ENCODE measurements at regions of chr17 and their contacts with region 1.

Region 1: GRCh38 chr17:74528491-74529199 is 2.6 kb downstream of the CD300LB start:
- DNase-seq: peak; percentile 12
- ATAC-seq: peak; percentile 89
- H3K4me3 Mint-ChIP-seq: no peak overlapping the region
- H3K27ac Mint-ChIP-seq: peak overlapping the region; percentile 27
- H3K4me1 Mint-ChIP-seq: peaks cover 32% of the 10 kb centered on the region
- H3K27me3 Mint-ChIP-seq: peaks cover 7% of the 10 kb centered on the region
- CTCF ChIP-seq: no peak

Region 2: DNA sequence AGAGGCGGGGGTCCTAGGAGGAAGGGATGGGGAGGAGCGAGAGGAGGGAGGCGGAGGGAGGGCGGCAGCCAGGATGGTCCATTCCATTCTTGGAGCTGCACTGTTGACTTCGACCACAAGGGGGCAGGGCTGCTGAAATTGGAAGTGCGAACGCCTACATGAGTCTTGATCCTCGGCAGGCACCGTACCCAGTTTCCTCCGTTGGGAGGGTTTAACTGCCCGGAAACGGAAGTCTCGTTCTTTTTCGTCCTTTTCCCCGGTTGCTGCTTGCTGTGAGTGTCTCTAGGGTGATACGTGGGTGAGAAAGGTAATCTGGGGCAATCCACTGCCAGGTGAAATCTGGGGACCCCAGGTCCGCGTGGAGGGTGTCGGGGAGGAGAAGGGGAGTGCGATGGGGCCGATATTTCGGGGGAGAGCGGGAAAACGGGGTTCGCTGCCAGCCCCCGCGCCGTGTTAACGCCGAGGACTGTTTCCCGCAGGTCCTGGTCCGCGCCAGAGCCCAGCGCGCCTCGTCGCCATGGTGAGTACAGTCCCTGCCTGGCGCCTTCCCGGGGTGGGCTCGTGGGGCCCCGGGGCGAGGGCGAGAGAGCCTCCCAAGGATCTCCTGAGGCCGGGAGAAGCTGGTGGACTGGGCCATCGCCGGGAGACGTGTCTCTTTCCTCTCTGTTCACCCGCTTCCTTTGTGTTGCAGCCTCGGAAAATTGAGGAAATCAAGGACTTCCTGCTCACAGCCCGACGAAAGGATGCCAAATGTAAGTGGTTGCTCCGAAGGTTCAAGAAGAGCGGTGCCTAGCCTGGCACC is 325.0 kb before region 1 on chr17 and contains the start of gene RPL38:
- CTCF ChIA-PET with region 1: interaction called, 3 read pairs
- POLR2A ChIA-PET with region 1: interaction called, 5 read pairs
- intact Hi-C with region 1: loop called (anchors 1 kb)
- DNase-seq: peak; percentile 90
- ATAC-seq: peak; percentile 94
- H3K4me3 Mint-ChIP-seq: peak within 1 kb of the TSS; percentile 100
- H3K27ac Mint-ChIP-seq: peak within 1 kb of the TSS; percentile 98
- H3K4me1 Mint-ChIP-seq: peaks cover 47% of the 10 kb centered on the region
- H3K27me3 Mint-ChIP-seq: peaks cover 23% of the 10 kb centered on the region
- CTCF ChIP-seq: no peak
- total RNA-seq, gene RPL38: 1,330 and 1,676 TPM in 2 replicates

Region 3: GRCh38 chr17:74368092-74369081 is 160.3 kb before region 1 on chr17:
- CTCF ChIA-PET with region 1: interaction called, 40 read pairs
- POLR2A ChIA-PET with region 1: interaction called, 3 read pairs
- intact Hi-C with region 1: loop called (anchors 1 kb)
- DNase-seq: peak; percentile 64
- ATAC-seq: peak; percentile 77
- H3K4me3 Mint-ChIP-seq: no peak overlapping the region
- H3K27ac Mint-ChIP-seq: no peak overlapping the region
- H3K4me1 Mint-ChIP-seq: peaks cover 14% of the 10 kb centered on the region
- H3K27me3 Mint-ChIP-seq: peaks cover 17% of the 10 kb centered on the region
- CTCF ChIP-seq: peak; percentile 58

Region 4: DNA sequence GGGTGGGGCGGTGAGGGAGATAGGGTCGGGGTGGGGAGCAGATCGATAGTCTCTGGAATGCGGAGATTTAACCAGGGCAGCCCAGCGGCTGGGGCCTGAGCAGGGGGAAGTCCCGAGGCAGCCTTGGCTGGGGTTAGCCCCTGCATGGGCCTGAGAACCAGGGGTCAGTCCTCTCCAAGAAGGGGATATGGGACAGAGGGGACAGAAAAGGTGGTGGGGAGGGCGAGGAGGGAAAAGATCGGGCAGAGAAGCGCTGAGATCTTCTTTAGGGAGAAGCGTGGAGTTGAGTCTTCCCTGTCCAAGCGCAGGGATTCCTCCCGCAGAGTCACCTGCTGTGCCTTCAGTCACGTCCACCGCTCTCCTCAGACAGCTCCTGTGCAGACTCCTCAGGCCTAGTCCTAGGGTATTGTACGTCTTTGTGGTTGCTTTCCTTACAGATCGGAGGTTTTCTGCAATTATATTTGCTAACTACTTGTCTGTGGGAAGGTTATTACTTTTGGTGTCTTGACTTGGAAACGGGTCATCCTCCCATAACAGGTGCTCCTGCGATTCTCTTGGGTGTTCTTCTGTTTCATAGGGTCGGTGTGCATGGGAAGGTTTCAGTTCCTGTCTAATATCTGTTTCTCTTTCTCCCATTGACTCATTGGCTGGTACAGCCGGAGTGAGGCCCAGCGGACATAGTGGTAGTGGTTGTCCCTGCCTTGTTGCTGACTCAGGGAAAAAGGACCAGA is 61.3 kb before region 1 on chr17:
- CTCF ChIA-PET with region 1: no interaction called
- POLR2A ChIA-PET with region 1: interaction called, 3 read pairs
- intact Hi-C with region 1: loop called (anchors 2 kb)
- DNase-seq: no peak
- ATAC-seq: peak; percentile 80
- H3K4me3 Mint-ChIP-seq: peak overlapping the region; percentile 82
- H3K27ac Mint-ChIP-seq: peak overlapping the region; percentile 4
- H3K4me1 Mint-ChIP-seq: peaks cover 22% of the 10 kb centered on the region
- H3K27me3 Mint-ChIP-seq: peaks cover 6% of the 10 kb centered on the region
- CTCF ChIP-seq: no peak

Region 5: DNA sequence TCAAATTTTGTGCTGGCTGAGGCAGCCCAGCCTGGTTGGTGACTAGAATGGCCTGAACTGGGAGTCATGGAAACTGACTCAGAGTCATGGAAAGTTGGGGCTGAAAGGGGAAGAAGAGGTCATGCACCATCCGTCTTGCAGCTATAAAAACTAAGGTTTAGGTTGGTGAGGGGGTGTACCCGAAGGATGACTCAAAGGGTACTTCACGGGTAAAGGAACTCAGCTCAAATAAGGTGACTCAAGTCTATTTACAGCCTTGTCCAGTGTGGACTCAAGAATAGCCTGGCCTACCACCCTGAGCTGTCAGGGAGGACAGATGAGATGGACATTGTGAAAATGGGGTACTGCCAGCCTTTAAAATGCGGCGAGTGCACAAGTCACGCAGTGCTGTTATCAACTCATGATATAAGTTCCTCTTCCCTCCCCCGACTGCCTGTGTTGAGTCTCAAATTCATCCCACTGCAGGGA is 16.0 kb before region 1 on chr17:
- CTCF ChIA-PET with region 1: no interaction called
- POLR2A ChIA-PET with region 1: interaction called, 3 read pairs
- intact Hi-C with region 1: loop called (anchors 1 kb)
- DNase-seq: no peak
- ATAC-seq: peak; percentile 82
- H3K4me3 Mint-ChIP-seq: peak overlapping the region; percentile 44
- H3K27ac Mint-ChIP-seq: peak overlapping the region; percentile 71
- H3K4me1 Mint-ChIP-seq: peaks cover 26% of the 10 kb centered on the region
- H3K27me3 Mint-ChIP-seq: peaks cover 5% of the 10 kb centered on the region
- CTCF ChIP-seq: no peak

Region 6: GRCh38 chr17:75069783-75070182 is 541.1 kb after region 1 on chr17:
- CTCF ChIA-PET with region 1: no interaction called
- POLR2A ChIA-PET with region 1: no interaction called
- intact Hi-C with region 1: no loop called
- DNase-seq: no peak
- ATAC-seq: no peak
- H3K4me3 Mint-ChIP-seq: no peak overlapping the region
- H3K27ac Mint-ChIP-seq: no peak overlapping the region
- H3K4me1 Mint-ChIP-seq: no peaks in the 10 kb centered on the region
- H3K27me3 Mint-ChIP-seq: no peaks in the 10 kb centered on the region
- CTCF ChIP-seq: no peak